Activated naive CD4-positive, alpha-beta T cell treated with anti-CD3 and anti-CD28 coated beads for 36 hours (primary cell): ENCODE measurements at regions of chr5 and their contacts with region 1.

Region 1: GRCh38 chr5:64958757-64959391 is 190.1 kb downstream of the CWC27 start:
- DNase-seq: no peak
- H3K4me3 Mint-ChIP-seq: no peak overlapping the region
- H3K27ac Mint-ChIP-seq: no peak overlapping the region
- H3K4me1 Mint-ChIP-seq: no peaks in the 10 kb centered on the region
- H3K27me3 Mint-ChIP-seq: no peaks in the 10 kb centered on the region

Region 2: DNA sequence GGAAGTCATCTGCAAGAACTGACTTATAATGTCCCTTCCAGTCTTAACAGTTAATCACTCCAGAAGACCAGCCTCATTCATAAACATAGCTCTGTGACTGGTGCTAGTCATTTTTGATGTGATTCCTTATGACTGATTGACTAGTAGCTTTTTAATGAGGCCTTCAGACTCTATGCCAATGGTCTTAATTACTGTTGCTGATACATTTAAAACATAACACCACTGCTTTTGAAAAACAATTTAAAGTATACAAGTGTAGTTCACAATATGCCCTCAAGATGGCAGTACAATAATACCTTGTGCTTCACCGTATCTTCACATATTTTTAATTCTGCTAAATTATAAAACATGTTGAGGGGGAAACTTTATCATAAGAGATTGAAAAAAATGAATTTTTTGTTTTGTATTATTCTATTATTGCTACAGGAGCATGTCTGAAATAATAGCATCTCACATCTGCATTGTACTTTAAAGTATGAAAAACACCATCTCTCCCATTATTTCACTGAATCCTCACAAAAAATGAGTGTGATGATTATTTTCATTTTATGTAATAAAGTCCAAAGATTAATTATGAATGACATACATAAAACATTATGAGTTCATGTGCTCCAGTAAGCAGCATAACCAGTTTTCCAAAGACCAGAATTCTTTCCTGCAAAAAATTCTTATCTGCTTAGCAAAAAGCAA is 323.7 kb before region 1 on chr5:
- CTCF ChIA-PET with region 1: no interaction called
- intact Hi-C with region 1: loop called (anchors 5 kb)
- DNase-seq: no peak
- H3K4me3 Mint-ChIP-seq: no peak overlapping the region
- H3K27ac Mint-ChIP-seq: no peak overlapping the region
- H3K4me1 Mint-ChIP-seq: peaks cover 3% of the 10 kb centered on the region
- H3K27me3 Mint-ChIP-seq: peaks cover 13% of the 10 kb centered on the region